Dorsolateral prefrontal cortex (tissue), 120 donors: ENCODE measurements at regions of chr15 and their contacts with region 1.

Region 1: GRCh38 chr15:84600851-84601838 is at the start of gene ZSCAN2:
- DNase-seq: peak; percentile 95 to 98 (median 97)
- H3K4me3 ChIP-seq: peak within 1 kb of the TSS; percentile 66 to 100 (median 93)
- H3K27ac ChIP-seq: peak within 1 kb of the TSS in 50 of 59 donors; percentile 0 to 88 (median 68)
- H3K27me3 ChIP-seq: no peaks in the 10 kb centered on the region
- CTCF ChIP-seq: peak in 31 of 56 donors; percentile 9 to 63 (median 29)
- total RNA-seq, gene ZSCAN2: 3.6 to 14.0 (median 7.1) TPM

Region 2: GRCh38 chr15:84633311-84634227 is 32.4 kb after region 1 on chr15:
- intact Hi-C with region 1: loop called (anchors 1 to 2 kb)
- DNase-seq: peak in 9 of 10 donors; percentile 39 to 75 (median 62)
- H3K4me3 ChIP-seq: peak overlapping the region; percentile 36 to 90 (median 78)
- H3K27ac ChIP-seq: peak overlapping the region; percentile 86 to 100 (median 97)
- H3K27me3 ChIP-seq: no peaks in the 10 kb centered on the region
- CTCF ChIP-seq: peak in 23 of 56 donors; percentile 3 to 54 (median 14)

Region 3: DNA sequence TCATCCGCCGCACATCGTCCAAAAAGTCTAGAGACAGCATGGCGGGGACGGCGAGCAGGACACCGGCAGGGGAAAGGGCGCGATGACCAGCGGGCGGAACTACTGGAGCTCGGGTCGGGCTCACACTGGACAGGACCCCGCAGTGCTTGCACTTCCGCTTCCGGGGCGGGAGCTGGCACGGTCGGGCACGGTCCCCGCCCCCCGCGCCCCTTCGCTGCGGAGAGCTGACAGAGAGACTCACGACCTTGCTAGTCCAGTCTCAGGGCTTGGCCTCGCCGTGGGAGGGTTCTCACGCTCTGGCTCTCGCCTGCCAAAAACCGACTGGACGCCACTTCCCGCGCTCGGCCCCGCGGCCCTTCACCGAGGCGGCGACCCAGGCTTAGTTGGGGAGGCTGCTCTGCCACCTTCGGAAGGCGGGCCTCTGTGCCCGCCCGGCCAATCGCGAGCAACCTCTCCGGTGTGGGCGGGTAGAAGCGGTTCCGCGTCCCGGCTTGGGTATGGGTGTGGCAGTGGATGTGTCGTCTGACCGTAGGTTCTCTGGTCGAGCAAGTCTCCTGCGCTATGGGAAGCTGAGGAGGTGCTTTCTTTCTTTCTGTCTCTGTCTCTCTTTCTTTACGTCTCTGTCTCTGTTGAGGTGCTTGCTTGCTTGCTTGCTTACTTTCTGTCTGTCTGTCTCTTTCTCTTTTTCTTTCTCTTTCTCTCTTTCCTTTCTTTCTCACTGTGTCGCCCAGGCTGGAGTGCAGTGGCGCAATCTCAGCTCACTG is 115.1 kb after region 1 on chr15 and contains the start of gene SEC11A:
- intact Hi-C with region 1: loop called (anchors 10 kb)
- DNase-seq: peak; percentile 93 to 97 (median 96)
- H3K4me3 ChIP-seq: peak within 1 kb of the TSS; percentile 61 to 99 (median 91)
- H3K27ac ChIP-seq: peak within 1 kb of the TSS; percentile 66 to 98 (median 95)
- H3K27me3 ChIP-seq: no peaks in the 10 kb centered on the region
- CTCF ChIP-seq: peak in 32 of 56 donors; percentile 7 to 53 (median 30)
- total RNA-seq, gene SEC11A: 22.6 to 55.4 (median 35.9) TPM

Region 4: GRCh38 chr15:84879088-84879792 is 278.1 kb after region 1 on chr15:
- intact Hi-C with region 1: loop called in 1 of 2 experiments (anchors 2 kb)
- DNase-seq: no peak
- H3K4me3 ChIP-seq: no peak overlapping the region
- H3K27ac ChIP-seq: no peak overlapping the region
- H3K27me3 ChIP-seq: peaks cover 0 to 5% (median 0%) of the 10 kb centered on the region in 45 donors
- CTCF ChIP-seq: no peak

Region 5: GRCh38 chr15:84947947-84948830 is 347.0 kb after region 1 on chr15:
- intact Hi-C with region 1: loop called in 1 of 2 experiments (anchors 5 kb)
- DNase-seq: no peak
- H3K4me3 ChIP-seq: no peak overlapping the region
- H3K27ac ChIP-seq: peak overlapping the region in 21 of 59 donors; percentile 12 to 93 (median 87)
- H3K27me3 ChIP-seq: no peaks in the 10 kb centered on the region
- CTCF ChIP-seq: no peak